ENCODE measurements at regions of chr1 and their contacts with region 1.

Region 1: DNA sequence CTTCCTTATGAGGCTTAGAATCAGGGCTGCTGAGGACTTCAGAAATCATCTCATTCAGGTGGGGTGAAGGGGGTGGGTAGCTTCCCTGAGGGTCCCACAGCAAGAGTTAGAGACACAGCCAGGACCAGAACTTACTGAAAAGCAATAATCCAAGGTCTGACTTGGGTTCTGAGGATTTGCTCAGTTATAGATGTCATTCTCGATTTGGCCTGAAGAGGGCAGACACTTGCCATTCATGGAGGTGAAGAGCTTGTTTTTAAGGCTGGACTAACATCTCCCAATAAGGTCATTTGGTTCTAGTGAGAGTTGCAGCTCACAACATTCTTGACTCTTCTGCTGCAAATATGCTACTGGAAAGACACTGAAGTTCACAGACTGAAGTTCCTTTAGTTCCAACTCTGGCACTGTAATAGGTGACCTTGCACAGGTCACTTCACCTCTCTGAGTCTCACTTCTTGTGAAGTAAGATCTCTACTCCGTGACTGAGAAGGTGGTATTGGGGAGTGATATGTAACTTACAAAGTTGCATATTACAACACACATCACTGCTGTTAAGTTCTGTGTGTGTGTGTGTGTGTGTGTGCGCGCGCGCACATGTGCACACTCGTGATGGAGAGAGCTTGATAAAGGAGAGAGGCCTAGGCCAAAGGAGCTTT is 69.8 kb upstream of the DIRAS3 start:
- DNase-seq: peak; percentile 89
- ATAC-seq: peak; percentile 58
- H3K4me3 ChIP-seq: no peak overlapping the region
- H3K27ac ChIP-seq: no peak overlapping the region
- H3K4me1 ChIP-seq: peaks cover 9% of the 10 kb centered on the region; the same call in 1 of the 2 replicates
- H3K27me3 ChIP-seq: no peaks in the 10 kb centered on the region
- CTCF ChIP-seq: peak; percentile 87

Region 2: GRCh38 chr1:68197891-68198290 is 77.6 kb after region 1 on chr1:
- CTCF ChIA-PET with region 1: interaction called, 5 read pairs
- POLR2A ChIA-PET with region 1: no interaction called
- intact Hi-C with region 1: loop called (anchors 2 kb)
- DNase-seq: peak; percentile 94
- ATAC-seq: peak; percentile 96
- H3K4me3 ChIP-seq: peak overlapping the region; percentile 19; the same call in 1 of the 2 replicates
- H3K27ac ChIP-seq: peak overlapping the region; percentile 93
- H3K4me1 ChIP-seq: peaks cover 47% of the 10 kb centered on the region
- H3K27me3 ChIP-seq: no peaks in the 10 kb centered on the region
- CTCF ChIP-seq: no peak

Region 3: GRCh38 chr1:68321084-68321685 is 200.9 kb after region 1 on chr1:
- CTCF ChIA-PET with region 1: interaction called, 32 read pairs
- POLR2A ChIA-PET with region 1: no interaction called
- intact Hi-C with region 1: loop called (anchors 1 kb)
- DNase-seq: peak; percentile 77
- ATAC-seq: peak; percentile 100
- H3K4me3 ChIP-seq: no peak overlapping the region
- H3K27ac ChIP-seq: no peak overlapping the region
- H3K4me1 ChIP-seq: no peaks in the 10 kb centered on the region
- H3K27me3 ChIP-seq: no peaks in the 10 kb centered on the region
- CTCF ChIP-seq: peak; percentile 92

Region 4: GRCh38 chr1:68384321-68384813 is 264.1 kb after region 1 on chr1:
- CTCF ChIA-PET with region 1: interaction called, 8 read pairs
- POLR2A ChIA-PET with region 1: no interaction called
- intact Hi-C with region 1: loop called (anchors 1 kb)
- DNase-seq: peak; percentile 98
- ATAC-seq: peak; percentile 76
- H3K4me3 ChIP-seq: peak overlapping the region; percentile 60
- H3K27ac ChIP-seq: peak overlapping the region; percentile 100
- H3K4me1 ChIP-seq: peaks cover 40% of the 10 kb centered on the region
- H3K27me3 ChIP-seq: no peaks in the 10 kb centered on the region
- CTCF ChIP-seq: peak; percentile 68

Region 5: DNA sequence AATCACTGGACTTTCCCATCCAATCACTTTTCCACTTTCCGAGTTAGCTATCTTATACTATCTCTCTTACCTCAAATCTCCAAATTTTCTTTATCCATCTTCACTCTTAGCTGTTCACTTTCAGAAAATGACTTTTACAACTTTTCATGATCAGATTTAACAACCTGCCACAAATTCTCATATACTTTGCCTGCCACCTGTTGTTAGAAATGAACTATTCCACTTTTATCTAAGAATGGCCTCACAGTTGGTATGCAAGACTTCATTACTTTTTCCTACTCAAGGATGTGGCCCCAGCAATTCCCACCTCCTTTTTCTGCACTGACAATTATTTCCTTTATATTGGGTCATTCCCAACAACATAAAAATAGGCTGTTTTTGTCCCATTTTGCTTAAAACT is 470.2 kb after region 1 on chr1:
- CTCF ChIA-PET with region 1: no interaction called
- POLR2A ChIA-PET with region 1: no interaction called
- intact Hi-C with region 1: loop called (anchors 10 kb)
- DNase-seq: peak; percentile 7
- ATAC-seq: peak; percentile 48; the same call in 1 of the 2 replicates
- H3K4me3 ChIP-seq: no peak overlapping the region
- H3K27ac ChIP-seq: no peak overlapping the region
- H3K4me1 ChIP-seq: no peaks in the 10 kb centered on the region
- H3K27me3 ChIP-seq: peaks cover 36% of the 10 kb centered on the region
- CTCF ChIP-seq: peak; percentile 53; the same call in 1 of the 2 replicates

Measured in PC-3 (cell line).